ENCODE measurements at regions of chr9 and their contacts with region 1.

Region 1: DNA sequence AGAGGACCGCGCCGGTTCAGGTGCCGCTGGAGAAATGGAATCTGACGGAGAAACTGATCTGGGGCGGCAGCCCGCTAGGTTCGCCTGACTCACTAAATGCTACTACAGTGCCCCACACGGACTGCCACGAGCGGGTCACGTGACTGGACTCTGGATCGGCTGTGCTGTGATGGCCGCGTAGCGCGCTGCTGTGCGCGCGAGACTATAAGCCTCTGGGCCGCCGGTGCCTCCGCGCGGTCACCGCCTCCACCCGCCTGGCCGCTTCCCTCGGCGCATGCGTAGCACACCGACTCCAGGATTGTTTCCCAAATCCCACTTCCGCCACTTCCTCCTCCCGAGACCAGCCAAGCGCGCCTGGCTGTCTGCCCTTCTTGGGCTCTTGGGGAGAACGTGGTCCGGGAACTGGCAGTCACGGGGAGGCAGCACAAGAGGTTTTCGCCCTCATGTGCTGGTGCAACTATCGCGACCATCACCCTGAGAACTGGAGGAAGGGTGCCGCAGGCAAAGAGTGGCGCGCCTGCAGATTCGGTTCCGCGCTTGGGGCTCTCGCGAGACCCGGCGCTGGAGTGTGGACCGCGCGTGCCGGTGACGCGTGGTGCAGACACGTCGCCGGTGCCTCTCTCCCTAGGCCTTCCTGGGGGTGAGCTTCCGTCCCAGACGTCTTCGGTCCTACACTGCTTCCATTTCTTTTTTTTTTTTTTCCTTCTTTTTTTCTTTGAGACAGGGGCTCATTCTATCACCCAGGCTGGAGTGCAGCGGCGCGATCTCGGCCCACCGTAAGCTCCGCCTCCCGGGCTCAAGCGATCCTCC is 35.8 kb upstream of the GLDC start:
- DNase-seq: peak; percentile 99
- ATAC-seq: peak; percentile 96
- H3K4me3 ChIP-seq: peak overlapping the region; percentile 71
- H3K27ac ChIP-seq: peak overlapping the region; percentile 94 to 99
- H3K4me1 ChIP-seq: peaks cover 9% of the 10 kb centered on the region
- CTCF ChIP-seq: no peak
- EP300 ChIP-seq: no peak
- POLR2A ChIP-seq: peak; percentile 58
- RAD21 ChIP-seq: no peak

Region 2: DNA sequence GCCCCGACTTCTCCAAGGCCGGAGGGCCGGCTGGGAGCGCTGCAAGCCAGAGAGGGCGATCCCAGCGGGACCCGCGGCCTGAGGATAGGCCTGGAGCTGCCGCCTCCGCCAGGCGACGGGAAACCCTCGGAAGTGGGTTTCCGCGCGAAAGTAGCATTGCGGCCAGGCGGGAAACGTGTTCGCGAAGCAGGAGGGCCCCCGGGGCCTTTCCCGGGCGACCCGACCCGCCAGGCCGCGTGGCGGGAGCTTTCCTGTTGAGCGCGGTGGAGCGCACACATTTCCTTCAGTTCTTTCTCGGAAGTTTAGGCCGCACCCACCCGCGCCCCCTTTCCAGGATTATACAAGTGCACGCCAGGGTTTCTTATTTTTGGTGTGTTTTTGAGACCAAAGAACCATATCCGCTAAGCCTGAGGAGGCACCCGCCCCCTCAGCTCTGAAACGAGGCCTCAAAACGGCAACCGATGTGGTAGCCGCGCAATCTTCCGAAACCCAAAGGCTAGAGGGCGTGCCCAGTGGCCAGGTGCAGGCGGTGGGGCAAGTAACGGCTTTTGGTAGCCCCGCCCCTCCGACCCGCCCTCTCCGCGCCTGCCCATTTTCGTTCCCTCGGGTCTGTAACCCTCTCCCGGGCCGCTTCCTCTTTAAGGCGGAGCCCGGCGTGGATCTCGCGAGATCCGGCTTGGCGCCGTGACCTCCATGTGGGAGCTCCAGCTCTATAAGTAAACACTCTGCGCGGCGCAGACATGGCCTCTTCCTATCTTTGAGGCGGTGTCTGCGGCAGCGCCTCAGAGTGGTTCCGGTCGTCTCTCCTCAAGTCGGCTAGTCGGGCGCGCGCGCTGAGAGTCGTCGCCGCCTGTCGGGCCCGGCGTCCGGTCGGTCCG is 268.6 kb before region 1 on chr9 and contains the start of gene UHRF2:
- CTCF ChIA-PET with region 1: interaction called, 3 read pairs
- POLR2A ChIA-PET with region 1: interaction called, 10 read pairs
- DNase-seq: peak; percentile 94 to 98
- ATAC-seq: peak; percentile 96 to 98
- H3K4me3 ChIP-seq: peak within 1 kb of the TSS; percentile 94
- H3K27ac ChIP-seq: peak within 1 kb of the TSS; percentile 91 to 96
- H3K4me1 ChIP-seq: peaks cover 17% of the 10 kb centered on the region
- CTCF ChIP-seq: no peak
- EP300 ChIP-seq: no peak
- POLR2A ChIP-seq: peak; percentile 72
- RAD21 ChIP-seq: no peak
- polyA plus RNA-seq, gene UHRF2: 60.6 and 74.3 TPM in 2 replicates

Region 3: DNA sequence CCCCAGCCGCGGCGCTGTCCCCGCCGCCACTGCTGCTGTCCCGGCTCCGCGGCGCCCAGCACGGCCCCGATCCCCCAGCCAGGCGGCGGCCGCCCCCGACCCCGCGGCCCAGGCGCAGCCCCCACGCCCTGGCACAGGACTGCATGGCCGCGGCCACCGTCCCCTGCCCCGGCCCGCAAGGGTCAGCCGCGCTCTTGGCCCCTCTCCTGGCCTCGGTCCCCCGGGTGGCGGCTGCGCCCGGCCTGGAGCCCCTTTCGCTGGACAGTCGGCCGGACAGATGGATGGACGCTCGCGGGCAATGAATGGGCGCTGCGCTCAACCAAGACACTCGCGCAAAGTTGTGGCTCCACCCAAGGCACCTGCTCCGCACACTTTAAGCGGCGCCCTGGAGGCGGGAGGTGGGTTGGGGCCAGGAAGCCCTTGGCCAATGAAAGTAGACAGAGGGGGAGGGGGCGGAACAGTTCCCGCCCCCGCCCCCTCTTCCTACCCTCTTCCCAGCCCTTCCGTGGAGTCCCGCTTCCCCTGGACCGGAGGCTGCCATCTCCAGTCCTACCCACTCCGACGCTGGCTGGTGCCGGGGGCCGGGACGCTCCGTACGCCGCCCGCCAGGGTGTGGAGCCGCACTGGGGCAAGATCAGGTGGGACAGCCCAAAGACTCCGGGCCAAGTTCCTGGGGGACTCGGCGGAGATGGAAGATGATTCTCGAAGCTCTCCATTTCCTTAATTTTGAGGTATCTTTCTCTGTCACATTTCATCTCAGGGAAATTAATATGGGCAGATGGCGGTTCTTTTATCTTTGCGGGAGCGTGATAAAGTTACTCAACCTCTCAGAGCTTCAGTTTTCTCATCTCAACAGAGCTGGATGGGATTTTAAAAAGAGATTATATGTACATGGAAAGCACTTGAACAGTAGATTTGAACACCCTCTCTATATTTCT is 35.7 kb before region 1 on chr9 and contains the start of gene GLDC:
- CTCF ChIA-PET with region 1: interaction called, 5 read pairs
- POLR2A ChIA-PET with region 1: interaction called, 11 read pairs
- DNase-seq: peak; percentile 91 to 97
- ATAC-seq: peak; percentile 94 to 97
- H3K4me3 ChIP-seq: peak within 1 kb of the TSS; percentile 80
- H3K27ac ChIP-seq: peak within 1 kb of the TSS; percentile 82 to 83
- H3K4me1 ChIP-seq: peaks cover 19% of the 10 kb centered on the region; the same call in 2 of the 3 replicates
- CTCF ChIP-seq: no peak
- EP300 ChIP-seq: no peak
- POLR2A ChIP-seq: peak; percentile 87
- RAD21 ChIP-seq: no peak
- polyA plus RNA-seq, gene GLDC: 18.8 and 20.6 TPM in 2 replicates

Region 4: GRCh38 chr9:6667633-6668280 is 13.6 kb before region 1 on chr9:
- CTCF ChIA-PET with region 1: interaction called, 21 read pairs
- POLR2A ChIA-PET with region 1: interaction called, 4 read pairs
- DNase-seq: peak; percentile 53 to 73
- ATAC-seq: peak in 1 of 2 experiments; percentile 51; a peak in 2 of 6 replicates
- H3K4me3 ChIP-seq: no peak overlapping the region
- H3K27ac ChIP-seq: peak overlapping the region; percentile 11 to 84; a peak in 3 of 6 replicates
- H3K4me1 ChIP-seq: peaks cover 46% of the 10 kb centered on the region
- CTCF ChIP-seq: peak; percentile 87
- EP300 ChIP-seq: no peak
- POLR2A ChIP-seq: no peak
- RAD21 ChIP-seq: peak; percentile 78 to 80

Region 5: GRCh38 chr9:6703898-6704639 is 22.7 kb after region 1 on chr9:
- CTCF ChIA-PET with region 1: interaction called, 5 read pairs
- POLR2A ChIA-PET with region 1: interaction called, 23 read pairs
- DNase-seq: peak; percentile 92 to 94
- ATAC-seq: peak; percentile 89 to 92
- H3K4me3 ChIP-seq: peak overlapping the region; percentile 65
- H3K27ac ChIP-seq: peak overlapping the region; percentile 92 to 93
- H3K4me1 ChIP-seq: peaks cover 4% of the 10 kb centered on the region; the same call in 2 of the 3 replicates
- CTCF ChIP-seq: no peak
- EP300 ChIP-seq: no peak
- POLR2A ChIP-seq: peak; percentile 90
- RAD21 ChIP-seq: no peak

Region 6: DNA sequence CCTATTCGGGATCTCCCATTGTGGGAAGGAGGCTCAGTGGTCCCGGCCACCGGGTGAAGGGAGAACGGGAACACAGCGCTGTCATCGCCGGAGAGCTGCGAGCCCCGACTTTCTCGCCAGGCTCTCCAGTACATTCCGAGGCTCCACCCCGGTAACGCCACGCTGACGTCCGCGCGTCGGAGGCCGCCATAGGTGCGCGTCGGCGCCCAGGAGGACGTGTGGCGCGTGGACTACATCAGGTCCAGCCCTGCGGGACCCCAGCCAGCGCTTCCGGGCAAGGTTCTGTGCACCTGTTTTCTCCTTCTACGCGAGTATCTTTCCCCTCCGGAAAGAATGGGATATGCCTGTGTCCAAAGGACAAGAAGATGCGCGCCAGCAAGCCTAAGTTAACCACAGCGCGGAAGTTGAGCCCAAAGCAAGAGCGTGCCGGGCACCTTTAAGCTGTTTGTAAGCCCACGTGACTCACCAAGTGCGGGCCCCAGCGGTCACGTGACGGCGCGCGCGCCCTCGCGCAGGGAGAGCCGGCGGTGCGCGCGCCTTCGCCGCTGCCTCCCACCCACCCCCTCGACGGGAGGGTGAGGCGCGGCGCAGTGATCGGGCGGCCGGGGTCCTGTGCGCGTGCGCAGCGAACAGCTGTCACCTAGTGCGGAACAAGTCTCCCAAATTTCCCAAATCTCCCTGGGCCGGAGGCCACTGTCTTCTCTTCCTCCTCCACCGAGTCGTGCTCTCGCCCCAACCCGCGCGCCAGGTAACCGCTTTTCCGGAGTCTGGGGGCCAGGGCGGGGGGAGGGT is 76.3 kb after region 1 on chr9 and contains the start of gene KDM4C:
- CTCF ChIA-PET with region 1: no interaction called
- POLR2A ChIA-PET with region 1: interaction called, 35 read pairs
- DNase-seq: peak; percentile 96 to 98
- ATAC-seq: peak; percentile 88 to 93
- H3K4me3 ChIP-seq: peak within 1 kb of the TSS; percentile 98
- H3K27ac ChIP-seq: peak within 1 kb of the TSS; percentile 87 to 93
- H3K4me1 ChIP-seq: peaks cover 12% of the 10 kb centered on the region; the same call in 2 of the 3 replicates
- CTCF ChIP-seq: no peak
- EP300 ChIP-seq: no peak
- POLR2A ChIP-seq: peak; percentile 83
- RAD21 ChIP-seq: no peak
- polyA plus RNA-seq, gene KDM4C: 15.6 and 16.2 TPM in 2 replicates

Region 7: DNA sequence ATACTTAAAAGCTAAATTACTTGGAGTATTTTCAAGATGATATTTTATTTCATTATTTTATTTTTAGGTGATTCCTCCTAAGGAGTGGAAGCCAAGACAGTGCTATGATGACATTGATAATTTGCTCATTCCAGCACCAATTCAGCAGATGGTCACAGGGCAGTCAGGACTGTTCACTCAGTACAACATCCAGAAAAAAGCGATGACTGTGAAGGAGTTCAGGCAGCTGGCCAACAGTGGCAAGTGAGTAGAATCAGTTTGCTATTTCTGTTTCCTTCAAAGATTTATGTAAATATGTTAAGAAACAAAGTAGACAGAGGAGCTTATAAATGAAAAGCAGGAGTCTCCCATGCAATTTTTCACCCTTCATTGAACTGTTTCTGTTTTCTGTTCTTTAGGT is 124.2 kb after region 1 on chr9:
- CTCF ChIA-PET with region 1: no interaction called
- POLR2A ChIA-PET with region 1: no interaction called
- DNase-seq: peak in 1 of 2 experiments; percentile 5
- ATAC-seq: no peak
- H3K4me3 ChIP-seq: no peak overlapping the region
- H3K27ac ChIP-seq: no peak overlapping the region
- H3K4me1 ChIP-seq: no peaks in the 10 kb centered on the region
- CTCF ChIP-seq: no peak
- EP300 ChIP-seq: no peak
- POLR2A ChIP-seq: no peak
- RAD21 ChIP-seq: no peak

Region 8: DNA sequence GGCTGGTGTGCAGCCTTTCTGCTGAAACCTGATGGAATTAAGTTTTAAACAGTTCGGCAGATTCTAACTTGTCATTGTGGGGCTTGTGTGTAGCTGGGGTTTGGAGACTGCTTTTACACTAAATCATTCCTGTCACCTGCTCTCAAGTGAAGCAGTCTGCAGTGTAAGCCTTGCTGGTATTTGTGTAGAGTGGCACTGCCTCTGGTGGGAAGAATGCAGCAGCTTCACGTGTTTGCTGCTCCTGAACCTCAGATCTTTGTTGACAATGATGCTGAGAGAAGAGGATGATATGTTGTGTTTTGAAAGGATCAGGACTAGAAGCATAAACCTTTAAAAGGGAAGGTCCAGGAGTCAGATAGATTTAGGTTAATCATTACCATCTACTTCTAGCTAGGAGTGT is 164.5 kb after region 1 on chr9:
- CTCF ChIA-PET with region 1: no interaction called
- POLR2A ChIA-PET with region 1: no interaction called
- DNase-seq: peak; percentile 35 to 59
- ATAC-seq: peak; percentile 91 to 92
- H3K4me3 ChIP-seq: no peak overlapping the region
- H3K27ac ChIP-seq: no peak overlapping the region
- H3K4me1 ChIP-seq: peaks cover 12% of the 10 kb centered on the region; the same call in 2 of the 3 replicates
- CTCF ChIP-seq: peak; percentile 39; the same call in 2 of the 3 replicates
- EP300 ChIP-seq: no peak
- POLR2A ChIP-seq: no peak
- RAD21 ChIP-seq: peak in 1 of 2 experiments; percentile 31; a peak in 2 of 5 replicates

Measured in A549 (cell line).